Naive thymus-derived CD4-positive, alpha-beta T cell (primary cell): ENCODE measurements at regions of chr6 and their contacts with region 1.

Region 1: GRCh38 chr6:25992413-25993037 is 29.9 kb downstream of the TRIM38 start:
- DNase-seq: peak; percentile 83 to 98 (median 91)
- ATAC-seq: peak; percentile 99
- H3K4me3 ChIP-seq: peak overlapping the region; percentile 79
- H3K4me3 Mint-ChIP-seq: peak overlapping the region; percentile 91 to 98 (median 94)
- H3K27ac ChIP-seq: peak overlapping the region; percentile 73
- H3K27ac Mint-ChIP-seq: peak overlapping the region; percentile 86 to 98 (median 95)
- H3K4me1 ChIP-seq: no peaks in the 10 kb centered on the region
- H3K4me1 Mint-ChIP-seq: peaks cover 0 to 40% (median 24%) of the 10 kb centered on the region in 7 donors
- H3K27me3 ChIP-seq: no peaks in the 10 kb centered on the region
- H3K27me3 Mint-ChIP-seq: no peaks in the 10 kb centered on the region

Region 2: DNA sequence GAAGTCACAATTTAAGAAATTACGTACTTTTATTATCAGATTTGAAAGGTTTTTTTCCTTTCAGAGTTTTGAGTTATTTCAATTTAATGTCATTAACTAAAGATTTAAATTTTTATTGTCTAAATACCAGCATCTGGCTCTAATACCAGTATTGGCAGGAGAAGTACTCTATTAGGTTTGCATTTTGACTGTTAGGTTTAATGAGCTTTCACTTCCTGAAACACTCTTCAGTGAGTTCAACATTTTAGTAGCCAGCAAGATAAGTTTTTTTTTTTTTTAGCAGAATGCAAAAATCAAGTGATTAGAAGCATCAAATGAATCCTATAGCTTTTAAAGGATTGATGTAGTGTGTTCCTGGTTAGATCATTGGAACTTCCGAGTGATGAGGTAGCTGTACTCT is 374.5 kb before region 1 on chr6:
- CTCF ChIA-PET with region 1: interaction called, 5 read pairs
- POLR2A ChIA-PET with region 1: no interaction called
- intact Hi-C with region 1: loop called in 1 of 2 experiments (anchors 10 kb)
- DNase-seq: no peak
- ATAC-seq: no peak
- H3K4me3 ChIP-seq: no peak overlapping the region
- H3K4me3 Mint-ChIP-seq: no peak overlapping the region
- H3K27ac ChIP-seq: no peak overlapping the region
- H3K27ac Mint-ChIP-seq: no peak overlapping the region
- H3K4me1 ChIP-seq: no peaks in the 10 kb centered on the region
- H3K4me1 Mint-ChIP-seq: no peaks in the 10 kb centered on the region
- H3K27me3 ChIP-seq: no peaks in the 10 kb centered on the region
- H3K27me3 Mint-ChIP-seq: peaks cover 0 to 2% (median 0%) of the 10 kb centered on the region in 5 donors

Region 3: GRCh38 chr6:25788305-25788922 is 204.1 kb before region 1 on chr6:
- CTCF ChIA-PET with region 1: interaction called, 3 read pairs
- POLR2A ChIA-PET with region 1: no interaction called
- intact Hi-C with region 1: loop called (anchors 1 kb)
- DNase-seq: peak in 7 of 9 donors; percentile 5 to 34 (median 23)
- ATAC-seq: peak; percentile 70
- H3K4me3 ChIP-seq: no peak overlapping the region
- H3K4me3 Mint-ChIP-seq: no peak overlapping the region
- H3K27ac ChIP-seq: no peak overlapping the region
- H3K27ac Mint-ChIP-seq: no peak overlapping the region
- H3K4me1 ChIP-seq: no peaks in the 10 kb centered on the region
- H3K4me1 Mint-ChIP-seq: peaks cover 0 to 3% (median 0%) of the 10 kb centered on the region in 7 donors
- H3K27me3 ChIP-seq: no peaks in the 10 kb centered on the region
- H3K27me3 Mint-ChIP-seq: peaks cover 0 to 4% (median 0%) of the 10 kb centered on the region in 5 donors

Region 4: GRCh38 chr6:25942561-25943147 is 49.9 kb before region 1 on chr6:
- CTCF ChIA-PET with region 1: no interaction called
- POLR2A ChIA-PET with region 1: no interaction called
- intact Hi-C with region 1: loop called in 1 of 2 experiments (anchors 2 kb)
- DNase-seq: peak in 6 of 9 donors; percentile 11 to 42 (median 27)
- ATAC-seq: peak; percentile 62
- H3K4me3 ChIP-seq: no peak overlapping the region
- H3K4me3 Mint-ChIP-seq: no peak overlapping the region
- H3K27ac ChIP-seq: no peak overlapping the region
- H3K27ac Mint-ChIP-seq: no peak overlapping the region
- H3K4me1 ChIP-seq: no peaks in the 10 kb centered on the region
- H3K4me1 Mint-ChIP-seq: peaks cover 4 to 26% (median 7%) of the 10 kb centered on the region in 7 donors
- H3K27me3 ChIP-seq: no peaks in the 10 kb centered on the region
- H3K27me3 Mint-ChIP-seq: peaks cover 0 to 3% (median 0%) of the 10 kb centered on the region in 5 donors

Region 5: GRCh38 chr6:26012061-26012460 is 19.5 kb after region 1 on chr6:
- CTCF ChIA-PET with region 1: interaction called, 18 read pairs
- POLR2A ChIA-PET with region 1: interaction called, 41 read pairs
- intact Hi-C with region 1: no loop called
- DNase-seq: no peak
- ATAC-seq: no peak
- H3K4me3 ChIP-seq: no peak overlapping the region
- H3K4me3 Mint-ChIP-seq: no peak overlapping the region
- H3K27ac ChIP-seq: no peak overlapping the region
- H3K27ac Mint-ChIP-seq: no peak overlapping the region
- H3K4me1 ChIP-seq: peaks cover 0 to 2% of the 10 kb centered on the region in 2 donors
- H3K4me1 Mint-ChIP-seq: peaks cover 0 to 6% (median 3%) of the 10 kb centered on the region in 7 donors
- H3K27me3 ChIP-seq: no peaks in the 10 kb centered on the region
- H3K27me3 Mint-ChIP-seq: no peaks in the 10 kb centered on the region

Region 6: DNA sequence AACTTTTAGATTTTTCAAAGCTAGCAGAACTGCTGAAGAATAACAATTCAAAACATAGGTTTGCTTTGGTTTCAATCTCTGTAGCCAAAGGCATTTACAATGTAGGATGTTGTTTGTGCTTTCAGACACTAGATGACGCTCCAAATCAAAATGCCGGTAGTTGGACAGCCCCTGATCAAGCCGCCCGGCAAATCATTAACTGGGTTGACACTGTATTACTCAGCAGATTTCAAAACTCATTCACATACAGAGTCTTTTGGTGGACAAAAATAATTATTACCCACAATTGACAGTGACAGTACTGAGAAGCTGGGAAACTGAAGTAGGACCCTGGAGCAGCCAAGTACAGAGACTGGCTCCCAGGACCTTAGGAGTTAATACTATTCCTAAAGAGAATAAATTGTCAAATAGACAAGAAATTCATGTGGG is 73.4 kb after region 1 on chr6:
- CTCF ChIA-PET with region 1: no interaction called
- POLR2A ChIA-PET with region 1: no interaction called
- intact Hi-C with region 1: no loop called
- DNase-seq: peak in 7 of 9 donors; percentile 51 to 74 (median 61)
- ATAC-seq: peak; percentile 97
- H3K4me3 ChIP-seq: no peak overlapping the region
- H3K4me3 Mint-ChIP-seq: no peak overlapping the region
- H3K27ac ChIP-seq: no peak overlapping the region
- H3K27ac Mint-ChIP-seq: no peak overlapping the region
- H3K4me1 ChIP-seq: no peaks in the 10 kb centered on the region
- H3K4me1 Mint-ChIP-seq: peaks cover 1 to 22% (median 11%) of the 10 kb centered on the region in 7 donors
- H3K27me3 ChIP-seq: no peaks in the 10 kb centered on the region
- H3K27me3 Mint-ChIP-seq: peaks cover 0 to 39% (median 0%) of the 10 kb centered on the region in 5 donors